ENCODE measurements at regions of chr18 and their contacts with region 1.

Region 1: DNA sequence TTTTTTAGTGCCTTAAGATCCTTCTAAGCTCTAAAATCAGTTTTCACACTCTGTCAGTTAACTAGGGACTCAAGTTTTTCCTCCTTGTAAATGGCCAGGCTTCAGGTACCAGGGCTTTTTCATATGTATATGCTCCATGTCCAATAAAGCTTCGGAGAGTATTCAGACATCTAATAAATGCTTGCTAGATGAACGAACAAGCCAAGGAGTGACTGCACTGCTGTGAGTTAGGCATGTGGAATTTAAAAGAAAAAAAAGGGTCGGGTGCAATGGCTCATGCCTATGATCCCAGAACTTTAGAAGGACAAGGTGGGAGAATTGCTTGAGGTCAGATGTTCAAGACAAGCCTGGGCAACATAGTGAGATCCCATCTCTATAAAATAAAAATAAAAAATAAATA is 81.9 kb downstream of the CDH2 start:
- DNase-seq: no peak
- ATAC-seq: no peak
- H3K4me3 ChIP-seq: no peak overlapping the region
- H3K4me3 Mint-ChIP-seq: no peak overlapping the region
- H3K27ac ChIP-seq: no peak overlapping the region
- H3K27ac Mint-ChIP-seq: no peak overlapping the region
- H3K4me1 ChIP-seq: no peaks in the 10 kb centered on the region
- H3K4me1 Mint-ChIP-seq: no peaks in the 10 kb centered on the region
- H3K27me3 ChIP-seq: no peaks in the 10 kb centered on the region
- H3K27me3 Mint-ChIP-seq: no peaks in the 10 kb centered on the region

Region 2: DNA sequence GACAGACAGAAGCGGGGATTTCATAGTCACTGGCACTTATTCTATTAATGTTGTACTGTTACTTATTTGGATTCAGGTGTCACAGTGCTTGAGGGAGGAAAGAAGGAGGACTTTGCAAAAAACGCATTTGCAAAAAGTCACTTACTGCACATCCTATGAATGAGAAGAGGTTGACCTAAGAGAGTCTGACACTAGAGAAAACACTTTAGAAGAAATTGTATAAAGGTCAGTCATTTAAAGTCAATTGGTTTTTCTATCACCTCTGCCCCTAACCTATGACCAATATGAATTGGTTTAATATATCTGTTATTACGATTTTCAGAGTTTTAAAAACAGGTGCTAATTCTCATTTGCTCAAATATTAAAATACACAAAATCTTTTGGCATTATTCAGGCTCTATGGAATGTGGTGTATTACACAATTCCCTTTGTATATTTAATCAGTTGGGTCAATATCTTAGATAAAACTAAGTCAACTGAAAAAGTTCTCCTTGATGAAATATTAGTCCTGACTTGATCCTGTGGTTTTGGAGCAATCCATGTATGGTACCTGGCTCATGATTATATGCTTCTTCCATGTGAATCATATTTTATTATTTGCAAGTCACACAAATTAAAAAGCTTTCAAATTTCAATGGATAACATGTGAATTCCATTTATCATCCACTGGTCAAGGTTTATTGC is 75.5 kb before region 1 on chr18:
- CTCF ChIA-PET with region 1: no interaction called
- POLR2A ChIA-PET with region 1: no interaction called
- intact Hi-C with region 1: loop called in 1 of 2 experiments (anchors 10 kb)
- DNase-seq: no peak
- ATAC-seq: no peak
- H3K4me3 ChIP-seq: no peak overlapping the region
- H3K4me3 Mint-ChIP-seq: no peak overlapping the region
- H3K27ac ChIP-seq: no peak overlapping the region
- H3K27ac Mint-ChIP-seq: no peak overlapping the region
- H3K4me1 ChIP-seq: no peaks in the 10 kb centered on the region
- H3K4me1 Mint-ChIP-seq: no peaks in the 10 kb centered on the region
- H3K27me3 ChIP-seq: no peaks in the 10 kb centered on the region
- H3K27me3 Mint-ChIP-seq: no peaks in the 10 kb centered on the region